GM23248 (cell line): ENCODE measurements at regions of chr19 and their contacts with region 1.

Region 1: GRCh38 chr19:32570081-32570785 is 10.8 kb upstream of the PDCD5 start:
- DNase-seq: peak; percentile 80
- H3K4me3 ChIP-seq: peak overlapping the region; percentile 56
- H3K27ac ChIP-seq: no peak overlapping the region
- H3K4me1 ChIP-seq: no peaks in the 10 kb centered on the region
- H3K27me3 ChIP-seq: no peaks in the 10 kb centered on the region

Region 2: GRCh38 chr19:32345261-32346207 is 224.7 kb before region 1 on chr19 and contains the start of gene ZNF507:
- in situ Hi-C with region 1: loop called (anchors 25 kb)
- DNase-seq: peak; percentile 92
- H3K4me3 ChIP-seq: peak within 1 kb of the TSS; percentile 96
- H3K27ac ChIP-seq: peak within 1 kb of the TSS; percentile 41
- H3K4me1 ChIP-seq: peaks cover 22% of the 10 kb centered on the region
- H3K27me3 ChIP-seq: no peaks in the 10 kb centered on the region
- total RNA-seq, gene ZNF507: 4.9 and 5.2 TPM in 2 replicates

Region 3: GRCh38 chr19:32691291-32691951 is 121.2 kb after region 1 on chr19 and contains the start of gene NUDT19:
- in situ Hi-C with region 1: no loop called
- DNase-seq: peak; percentile 94
- H3K4me3 ChIP-seq: peak within 1 kb of the TSS; percentile 80
- H3K27ac ChIP-seq: peak within 1 kb of the TSS; percentile 74
- H3K4me1 ChIP-seq: peaks cover 29% of the 10 kb centered on the region
- H3K27me3 ChIP-seq: no peaks in the 10 kb centered on the region
- total RNA-seq, gene NUDT19: 18.0 and 19.5 TPM in 2 replicates

Region 4: DNA sequence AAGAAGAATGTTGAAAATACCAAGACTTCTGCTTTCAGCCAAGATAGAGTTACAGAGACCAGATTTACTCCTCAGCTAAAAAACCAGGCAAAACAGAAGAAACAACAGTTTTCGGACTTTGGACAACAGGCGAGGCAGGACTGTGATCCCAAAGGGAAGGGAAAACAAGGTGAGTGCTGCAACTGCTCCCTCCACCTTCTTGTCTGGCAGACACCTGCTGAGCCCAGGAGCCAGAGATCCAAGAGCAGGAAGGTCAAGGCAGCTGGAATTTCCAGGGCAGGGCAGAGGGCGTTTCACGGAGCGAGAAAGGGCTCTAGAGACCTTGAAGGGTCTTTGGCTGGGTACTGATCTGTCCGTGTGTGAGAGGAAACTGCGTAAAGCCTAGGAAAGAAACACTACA is 332.2 kb after region 1 on chr19:
- in situ Hi-C with region 1: no loop called
- DNase-seq: no peak
- H3K4me3 ChIP-seq: no peak overlapping the region
- H3K27ac ChIP-seq: no peak overlapping the region
- H3K4me1 ChIP-seq: no peaks in the 10 kb centered on the region
- H3K27me3 ChIP-seq: no peaks in the 10 kb centered on the region